Mammary epithelial cell (primary cell): ENCODE measurements at regions of chr9 and their contacts with region 1.

Region 1: GRCh38 chr9:87684627-87685219 is 41.2 kb upstream of the CTSL start:
- DNase-seq: peak; percentile 46
- H3K4me3 ChIP-seq: no peak overlapping the region
- H3K27ac ChIP-seq: no peak overlapping the region
- H3K4me1 ChIP-seq: no peaks in the 10 kb centered on the region
- H3K27me3 ChIP-seq: no peaks in the 10 kb centered on the region
- CTCF ChIP-seq: peak; percentile 64 to 80

Region 2: DNA sequence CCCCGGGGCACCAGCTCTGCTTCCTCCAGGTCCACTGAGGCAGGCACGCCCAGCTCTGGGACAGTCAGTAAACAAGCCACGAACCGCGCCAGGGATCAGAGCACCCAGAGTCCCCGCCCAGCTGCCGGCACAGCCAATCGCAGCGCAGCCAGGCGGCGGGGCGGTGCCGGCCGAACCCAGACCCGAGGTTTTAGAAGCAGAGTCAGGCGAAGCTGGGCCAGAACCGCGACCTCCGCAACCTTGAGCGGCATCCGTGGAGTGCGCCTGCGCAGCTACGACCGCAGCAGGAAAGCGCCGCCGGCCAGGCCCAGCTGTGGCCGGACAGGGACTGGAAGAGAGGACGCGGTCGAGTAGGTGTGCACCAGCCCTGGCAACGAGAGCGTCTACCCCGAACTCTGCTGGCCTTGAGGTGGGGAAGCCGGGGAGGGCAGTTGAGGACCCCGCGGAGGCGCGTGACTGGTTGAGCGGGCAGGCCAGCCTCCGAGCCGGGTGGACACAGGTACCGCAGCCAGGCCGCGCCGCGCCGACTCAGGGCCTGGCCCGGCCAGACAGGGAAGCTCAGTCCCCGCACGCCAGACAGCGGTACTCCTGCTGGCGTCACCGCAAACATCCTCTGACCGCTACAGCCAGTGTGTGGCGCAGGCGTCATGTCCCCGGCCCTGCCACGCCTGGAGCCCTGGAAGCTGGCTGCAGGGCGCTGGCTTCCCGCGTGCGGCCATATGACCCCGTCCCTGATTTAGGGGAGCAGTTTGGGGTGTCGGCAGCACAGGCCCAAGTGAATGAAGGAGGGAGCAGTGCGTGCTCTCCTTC is 41.4 kb after region 1 on chr9 and contains the start of gene CTSL:
- CTCF ChIA-PET with region 1: interaction called, 5 read pairs
- dilution Hi-C with region 1: no loop called
- in situ Hi-C with region 1: no loop called
- intact Hi-C with region 1: loop called (anchors 2 kb)
- DNase-seq: peak; percentile 70
- H3K4me3 ChIP-seq: peak within 1 kb of the TSS; percentile 48 to 78 (median 70)
- H3K27ac ChIP-seq: peak within 1 kb of the TSS; percentile 58
- H3K4me1 ChIP-seq: no peaks in the 10 kb centered on the region
- H3K27me3 ChIP-seq: no peaks in the 10 kb centered on the region
- CTCF ChIP-seq: peak in 1 of 2 donors; percentile 49
- total RNA-seq, gene CTSL: 38.8 to 109 TPM

Region 3: GRCh38 chr9:87803622-87804345 is 119.1 kb after region 1 on chr9:
- CTCF ChIA-PET with region 1: no interaction called
- dilution Hi-C with region 1: no loop called
- in situ Hi-C with region 1: loop called in 1 of 2 experiments (anchors 5 kb)
- intact Hi-C with region 1: no loop called
- DNase-seq: no peak
- H3K4me3 ChIP-seq: no peak overlapping the region
- H3K27ac ChIP-seq: no peak overlapping the region
- H3K4me1 ChIP-seq: peaks cover 6% of the 10 kb centered on the region
- H3K27me3 ChIP-seq: peaks cover 2% of the 10 kb centered on the region
- CTCF ChIP-seq: no peak

Region 4: GRCh38 chr9:87812375-87813118 is 127.8 kb after region 1 on chr9:
- CTCF ChIA-PET with region 1: interaction called, 6 read pairs
- dilution Hi-C with region 1: no loop called
- in situ Hi-C with region 1: loop called (anchors 5 kb)
- intact Hi-C with region 1: loop called (anchors 1 kb)
- DNase-seq: peak; percentile 62
- H3K4me3 ChIP-seq: no peak overlapping the region
- H3K27ac ChIP-seq: no peak overlapping the region
- H3K4me1 ChIP-seq: peaks cover 10% of the 10 kb centered on the region
- H3K27me3 ChIP-seq: no peaks in the 10 kb centered on the region
- CTCF ChIP-seq: peak; percentile 98 to 100

Region 5: GRCh38 chr9:88041447-88041846 is 356.7 kb after region 1 on chr9:
- CTCF ChIA-PET with region 1: no interaction called
- dilution Hi-C with region 1: no loop called
- in situ Hi-C with region 1: loop called in 1 of 2 experiments (anchors 25 kb)
- intact Hi-C with region 1: loop called (anchors 5 kb)
- DNase-seq: no peak
- H3K4me3 ChIP-seq: no peak overlapping the region
- H3K27ac ChIP-seq: no peak overlapping the region
- H3K4me1 ChIP-seq: no peaks in the 10 kb centered on the region
- H3K27me3 ChIP-seq: no peaks in the 10 kb centered on the region
- CTCF ChIP-seq: peak in 1 of 2 donors; percentile 43